ENCODE measurements at regions of chr17 and their contacts with region 1.

Region 1: DNA sequence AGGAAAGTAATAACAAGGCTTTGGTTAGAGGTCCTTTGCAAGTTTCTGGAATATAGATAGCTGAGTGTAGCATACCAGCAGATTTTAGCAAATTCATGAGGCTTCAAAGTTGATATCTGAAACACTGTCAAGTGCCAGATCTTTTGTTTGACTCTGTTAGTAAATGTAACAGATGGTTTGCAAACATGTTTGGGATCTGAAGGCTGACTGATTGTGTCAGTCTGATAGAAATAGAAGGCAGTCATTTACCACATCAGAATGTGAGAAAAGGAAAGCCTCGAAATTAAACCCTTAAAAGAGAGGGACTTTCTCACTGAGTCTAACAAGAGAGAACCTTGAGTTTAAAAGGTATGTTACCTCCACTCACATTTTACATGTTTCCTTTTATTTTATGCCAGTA is 371.5 kb downstream of the KIF2B start:
- DNase-seq: no peak

Region 2: GRCh38 chr17:53032861-53033271 is 1161.4 kb before region 1 on chr17:
- intact Hi-C with region 1: loop called in 1 of 2 experiments (anchors 10 kb)
- DNase-seq: no peak

Region 3: GRCh38 chr17:54235571-54235970 is 41.3 kb after region 1 on chr17:
- intact Hi-C with region 1: no loop called
- DNase-seq: no peak

Region 4: GRCh38 chr17:54408741-54409140 is 214.5 kb after region 1 on chr17:
- intact Hi-C with region 1: no loop called
- DNase-seq: no peak

Measured in posterior vena cava (tissue), 2 donors.